Endothelial cell of umbilical vein (primary cell): ENCODE measurements at regions of chr6 and their contacts with region 1.

Region 1: DNA sequence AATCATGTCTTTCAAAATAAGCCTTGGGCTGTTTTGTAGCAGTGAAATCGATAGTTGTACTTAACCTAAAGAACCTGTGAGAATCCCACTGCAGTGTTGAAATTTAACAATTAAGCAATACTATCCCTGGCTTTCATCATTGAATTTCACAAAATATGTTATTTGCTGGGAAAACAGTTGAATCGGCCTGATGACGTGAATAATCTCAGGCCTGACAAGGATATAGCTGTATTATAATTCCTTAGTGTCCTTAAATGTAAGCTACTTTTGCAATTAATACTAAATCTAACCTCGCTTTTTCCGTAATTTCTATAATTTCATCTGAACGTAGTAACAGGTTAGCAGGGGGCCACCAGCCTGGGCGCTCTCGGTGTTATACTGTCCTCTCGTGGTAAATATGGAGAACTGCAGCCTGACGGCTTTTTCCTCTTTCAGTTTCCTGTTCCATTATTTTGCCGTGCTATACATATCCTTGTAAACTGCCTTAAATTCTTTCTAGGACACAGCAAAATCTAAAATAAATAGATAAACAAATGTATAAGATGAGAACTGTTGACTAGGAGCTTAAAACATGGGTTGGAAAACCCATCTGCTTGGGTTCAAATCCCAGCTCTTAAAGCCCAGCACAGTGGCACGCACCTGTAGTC is 24.0 kb downstream of the MTFR2 start:
- DNase-seq: peak; percentile 67
- H3K4me3 ChIP-seq: peak overlapping the region in 1 of 3 experiments; percentile 25
- H3K27ac ChIP-seq: no peak overlapping the region
- H3K4me1 ChIP-seq: no peaks in the 10 kb centered on the region
- H3K27me3 ChIP-seq: no peaks in the 10 kb centered on the region
- CTCF ChIP-seq: peak; percentile 97 to 99
- POLR2A ChIP-seq: no peak

Region 2: GRCh38 chr6:135497412-135498269 is 728.5 kb before region 1 on chr6 and contains the start of gene AHI1:
- CTCF ChIA-PET with region 1: interaction called, 10 read pairs
- POLR2A ChIA-PET with region 1: no interaction called
- dilution Hi-C with region 1: no loop called
- intact Hi-C with region 1: no loop called
- DNase-seq: peak; percentile 97
- H3K4me3 ChIP-seq: peak within 1 kb of the TSS; percentile 96 to 98 (median 96)
- H3K27ac ChIP-seq: peak within 1 kb of the TSS; percentile 99
- H3K4me1 ChIP-seq: peaks cover 23% of the 10 kb centered on the region
- H3K27me3 ChIP-seq: no peaks in the 10 kb centered on the region
- CTCF ChIP-seq: peak in 1 of 2 donors; percentile 3
- POLR2A ChIP-seq: peak; percentile 90
- total RNA-seq, gene AHI1: 19.8 and 20.7 TPM in 2 replicates

Region 3: DNA sequence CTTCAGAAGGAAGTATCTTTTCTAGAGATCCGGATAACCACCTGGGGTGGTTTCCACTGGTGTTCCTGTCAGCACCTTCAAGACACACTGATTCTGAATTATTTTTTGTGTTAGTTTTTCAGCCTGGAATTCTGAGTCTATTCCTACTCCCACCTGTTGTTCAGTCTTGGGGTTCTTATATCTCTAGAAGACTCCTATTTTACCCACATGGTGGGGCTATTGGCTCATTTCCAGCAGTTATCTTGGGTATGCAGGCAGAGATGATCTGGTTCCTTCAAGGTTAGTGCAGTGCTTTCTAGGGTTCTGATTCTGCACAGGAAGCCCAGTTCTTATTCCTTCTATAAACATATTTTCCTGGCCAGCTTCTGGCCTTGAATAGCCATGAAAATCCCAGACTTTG is 550.3 kb before region 1 on chr6:
- CTCF ChIA-PET with region 1: interaction called, 13 read pairs
- POLR2A ChIA-PET with region 1: no interaction called
- dilution Hi-C with region 1: no loop called
- intact Hi-C with region 1: loop called (anchors 1 kb)
- DNase-seq: peak; percentile 63
- H3K4me3 ChIP-seq: no peak overlapping the region
- H3K27ac ChIP-seq: no peak overlapping the region
- H3K4me1 ChIP-seq: no peaks in the 10 kb centered on the region
- H3K27me3 ChIP-seq: no peaks in the 10 kb centered on the region
- CTCF ChIP-seq: peak in 1 of 2 donors; percentile 8
- POLR2A ChIP-seq: no peak

Region 4: GRCh38 chr6:135909737-135910387 is 316.3 kb before region 1 on chr6:
- CTCF ChIA-PET with region 1: interaction called, 19 read pairs
- POLR2A ChIA-PET with region 1: no interaction called
- dilution Hi-C with region 1: no loop called
- intact Hi-C with region 1: loop called (anchors 1 kb)
- DNase-seq: peak; percentile 52
- H3K4me3 ChIP-seq: no peak overlapping the region
- H3K27ac ChIP-seq: no peak overlapping the region
- H3K4me1 ChIP-seq: no peaks in the 10 kb centered on the region
- H3K27me3 ChIP-seq: no peaks in the 10 kb centered on the region
- CTCF ChIP-seq: peak; percentile 50 to 54
- POLR2A ChIP-seq: no peak

Region 5: GRCh38 chr6:136208783-136209182 is 17.4 kb before region 1 on chr6:
- CTCF ChIA-PET with region 1: no interaction called
- POLR2A ChIA-PET with region 1: no interaction called
- dilution Hi-C with region 1: no loop called
- intact Hi-C with region 1: no loop called
- DNase-seq: no peak
- H3K4me3 ChIP-seq: no peak overlapping the region
- H3K27ac ChIP-seq: no peak overlapping the region
- H3K4me1 ChIP-seq: no peaks in the 10 kb centered on the region
- H3K27me3 ChIP-seq: no peaks in the 10 kb centered on the region
- CTCF ChIP-seq: no peak
- POLR2A ChIP-seq: no peak

Region 6: DNA sequence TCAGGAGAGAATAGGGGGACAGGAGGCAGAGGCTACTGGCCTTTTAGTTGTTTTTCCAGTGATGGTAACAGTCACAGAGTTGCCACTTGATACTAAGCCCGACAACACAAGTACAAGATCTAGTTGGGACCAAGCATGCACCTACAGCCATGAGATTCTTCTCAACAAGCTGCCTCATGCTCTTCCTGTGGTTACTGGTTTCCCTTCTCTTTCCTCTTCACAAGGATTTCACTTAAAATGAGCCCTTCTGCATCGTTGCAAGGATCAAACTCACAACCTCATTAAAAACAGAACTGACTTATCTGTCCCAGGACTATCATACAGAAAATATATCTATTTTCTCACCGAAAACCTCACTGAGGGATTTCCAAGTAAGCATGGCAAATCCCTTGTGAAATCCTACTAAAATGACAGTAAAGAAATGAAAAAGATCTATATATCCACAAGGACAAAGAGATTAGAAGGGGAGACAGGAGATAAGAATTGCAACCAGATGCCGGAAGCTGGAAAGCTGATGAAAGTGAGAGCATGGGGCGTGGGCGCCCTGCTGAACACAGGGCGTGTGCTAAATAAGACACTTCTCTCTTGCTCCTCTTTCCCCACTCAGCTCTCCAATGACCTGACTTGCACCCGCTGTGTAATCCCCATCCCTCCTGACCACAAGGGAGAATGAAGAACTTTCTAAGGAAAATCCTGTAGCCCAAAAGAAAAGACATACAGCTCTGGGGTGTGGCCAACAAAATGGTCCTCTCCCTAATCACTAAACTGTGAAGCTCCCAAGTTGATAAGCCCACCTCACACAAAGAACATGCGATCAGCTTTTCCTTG is 10.5 kb after region 1 on chr6:
- CTCF ChIA-PET with region 1: interaction called, 15 read pairs
- POLR2A ChIA-PET with region 1: no interaction called
- dilution Hi-C with region 1: no loop called
- intact Hi-C with region 1: no loop called
- DNase-seq: no peak
- H3K4me3 ChIP-seq: no peak overlapping the region
- H3K27ac ChIP-seq: no peak overlapping the region
- H3K4me1 ChIP-seq: peaks cover 3% of the 10 kb centered on the region
- H3K27me3 ChIP-seq: no peaks in the 10 kb centered on the region
- CTCF ChIP-seq: no peak
- POLR2A ChIP-seq: no peak

Region 7: GRCh38 chr6:136284909-136285308 is 58.8 kb after region 1 on chr6:
- CTCF ChIA-PET with region 1: no interaction called
- POLR2A ChIA-PET with region 1: no interaction called
- dilution Hi-C with region 1: no loop called
- intact Hi-C with region 1: no loop called
- DNase-seq: peak; percentile 13
- H3K4me3 ChIP-seq: no peak overlapping the region
- H3K27ac ChIP-seq: no peak overlapping the region
- H3K4me1 ChIP-seq: peaks cover 36% of the 10 kb centered on the region
- H3K27me3 ChIP-seq: no peaks in the 10 kb centered on the region
- CTCF ChIP-seq: no peak
- POLR2A ChIP-seq: no peak

Region 8: DNA sequence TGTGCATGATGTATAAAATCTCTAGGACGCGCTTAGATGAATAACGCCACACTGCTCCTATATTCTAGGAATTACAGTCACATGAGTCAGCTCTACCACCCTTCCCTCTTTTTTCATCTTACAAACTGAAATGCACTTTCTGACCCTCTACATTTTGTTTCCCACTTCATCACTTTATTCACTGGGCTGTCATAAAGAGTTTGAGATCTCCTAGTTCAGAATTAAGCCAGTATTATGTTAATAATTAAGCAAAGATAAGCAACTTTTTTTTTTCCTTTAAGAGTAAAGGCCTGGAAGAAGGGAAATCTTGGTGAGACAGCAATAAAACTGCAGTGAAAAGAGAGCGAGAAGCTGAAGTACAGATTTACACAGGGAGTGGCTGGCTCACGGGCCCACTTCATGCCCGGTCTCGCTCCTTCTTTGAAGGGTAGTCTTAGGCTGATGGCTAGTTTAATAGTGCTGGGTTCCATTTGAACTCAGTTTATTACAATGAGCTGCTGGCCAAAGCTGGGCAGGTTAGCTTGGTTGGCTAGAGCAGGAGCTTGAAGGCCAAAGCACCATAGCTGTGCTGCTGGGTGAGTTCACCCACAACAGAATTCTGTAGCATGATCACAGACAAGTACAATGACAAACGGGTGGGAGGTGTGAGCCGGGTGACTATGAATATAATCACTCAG is 213.5 kb after region 1 on chr6:
- CTCF ChIA-PET with region 1: no interaction called
- POLR2A ChIA-PET with region 1: no interaction called
- dilution Hi-C with region 1: no loop called
- intact Hi-C with region 1: no loop called
- DNase-seq: no peak
- H3K4me3 ChIP-seq: no peak overlapping the region
- H3K27ac ChIP-seq: no peak overlapping the region
- H3K4me1 ChIP-seq: no peaks in the 10 kb centered on the region
- H3K27me3 ChIP-seq: peaks cover 1 to 2% of the 10 kb centered on the region in 2 experiments
- CTCF ChIP-seq: no peak
- POLR2A ChIP-seq: no peak